ENCODE measurements at regions of chr2 and their contacts with region 1.

Region 1: DNA sequence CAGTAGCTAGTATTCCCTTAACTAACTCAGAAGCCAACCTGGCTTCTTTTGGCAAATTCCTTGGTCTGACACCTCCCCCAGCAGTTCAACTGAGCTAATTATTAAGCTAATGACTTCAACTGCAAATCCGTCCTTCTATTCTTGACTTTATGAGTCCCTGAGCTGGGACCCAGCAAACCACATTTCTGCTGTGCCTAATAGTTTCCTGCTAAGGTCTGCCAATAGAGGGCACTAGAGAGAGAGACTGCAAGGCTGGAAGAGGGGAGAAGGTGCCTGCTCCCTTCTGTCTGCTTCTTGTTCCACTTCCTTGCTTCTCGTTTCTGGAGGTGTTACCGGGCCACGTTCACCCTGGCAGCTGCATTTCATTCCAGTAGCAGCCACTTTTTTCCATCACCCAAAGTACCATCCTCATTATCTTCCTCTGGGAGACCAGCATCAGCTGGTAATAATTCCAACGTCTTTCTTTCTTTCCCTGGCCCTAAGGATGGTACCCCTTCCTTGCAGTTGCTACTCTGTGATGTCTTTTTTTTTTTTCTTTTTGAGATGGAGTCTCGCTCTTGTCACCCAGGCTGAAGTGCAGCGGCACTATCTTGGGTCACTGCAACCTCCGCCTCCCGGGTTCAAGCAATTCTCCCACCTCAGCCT is 352.0 kb downstream of the TNS1 start:
- DNase-seq: peak; percentile 46
- ATAC-seq: peak; percentile 95
- H3K4me3 Mint-ChIP-seq: no peak overlapping the region
- H3K27ac Mint-ChIP-seq: no peak overlapping the region
- H3K4me1 Mint-ChIP-seq: peaks cover 26% of the 10 kb centered on the region
- H3K27me3 Mint-ChIP-seq: no peaks in the 10 kb centered on the region
- CTCF ChIP-seq: peak; percentile 20; the same call in 1 of the 2 replicates

Region 2: GRCh38 chr2:217451666-217452065 is 199.2 kb before region 1 on chr2:
- CTCF ChIA-PET with region 1: no interaction called
- POLR2A ChIA-PET with region 1: no interaction called
- DNase-seq: no peak
- ATAC-seq: no peak
- H3K4me3 Mint-ChIP-seq: no peak overlapping the region
- H3K27ac Mint-ChIP-seq: no peak overlapping the region
- H3K4me1 Mint-ChIP-seq: no peaks in the 10 kb centered on the region
- H3K27me3 Mint-ChIP-seq: no peaks in the 10 kb centered on the region; the same call in 1 of the 2 replicates
- CTCF ChIP-seq: no peak

Region 3: GRCh38 chr2:217555081-217555876 is 95.6 kb before region 1 on chr2:
- CTCF ChIA-PET with region 1: interaction called, 10 read pairs
- POLR2A ChIA-PET with region 1: no interaction called
- DNase-seq: peak; percentile 22
- ATAC-seq: peak; percentile 76
- H3K4me3 Mint-ChIP-seq: no peak overlapping the region
- H3K27ac Mint-ChIP-seq: peak overlapping the region; percentile 37; the same call in 1 of the 2 replicates
- H3K4me1 Mint-ChIP-seq: peaks cover 49% of the 10 kb centered on the region
- H3K27me3 Mint-ChIP-seq: peaks cover 37% of the 10 kb centered on the region
- CTCF ChIP-seq: no peak

Region 4: GRCh38 chr2:217617616-217618022 is 33.2 kb before region 1 on chr2:
- CTCF ChIA-PET with region 1: interaction called, 14 read pairs
- POLR2A ChIA-PET with region 1: no interaction called
- DNase-seq: no peak
- ATAC-seq: no peak; the same call in 1 of the 2 replicates
- H3K4me3 Mint-ChIP-seq: no peak overlapping the region
- H3K27ac Mint-ChIP-seq: no peak overlapping the region
- H3K4me1 Mint-ChIP-seq: peaks cover 18% of the 10 kb centered on the region
- H3K27me3 Mint-ChIP-seq: no peaks in the 10 kb centered on the region
- CTCF ChIP-seq: no peak

Region 5: GRCh38 chr2:217636991-217637944 is 13.6 kb before region 1 on chr2:
- CTCF ChIA-PET with region 1: interaction called, 29 read pairs
- POLR2A ChIA-PET with region 1: no interaction called
- DNase-seq: no peak
- ATAC-seq: no peak
- H3K4me3 Mint-ChIP-seq: no peak overlapping the region
- H3K27ac Mint-ChIP-seq: no peak overlapping the region
- H3K4me1 Mint-ChIP-seq: no peaks in the 10 kb centered on the region
- H3K27me3 Mint-ChIP-seq: no peaks in the 10 kb centered on the region; the same call in 1 of the 2 replicates
- CTCF ChIP-seq: no peak

Region 6: DNA sequence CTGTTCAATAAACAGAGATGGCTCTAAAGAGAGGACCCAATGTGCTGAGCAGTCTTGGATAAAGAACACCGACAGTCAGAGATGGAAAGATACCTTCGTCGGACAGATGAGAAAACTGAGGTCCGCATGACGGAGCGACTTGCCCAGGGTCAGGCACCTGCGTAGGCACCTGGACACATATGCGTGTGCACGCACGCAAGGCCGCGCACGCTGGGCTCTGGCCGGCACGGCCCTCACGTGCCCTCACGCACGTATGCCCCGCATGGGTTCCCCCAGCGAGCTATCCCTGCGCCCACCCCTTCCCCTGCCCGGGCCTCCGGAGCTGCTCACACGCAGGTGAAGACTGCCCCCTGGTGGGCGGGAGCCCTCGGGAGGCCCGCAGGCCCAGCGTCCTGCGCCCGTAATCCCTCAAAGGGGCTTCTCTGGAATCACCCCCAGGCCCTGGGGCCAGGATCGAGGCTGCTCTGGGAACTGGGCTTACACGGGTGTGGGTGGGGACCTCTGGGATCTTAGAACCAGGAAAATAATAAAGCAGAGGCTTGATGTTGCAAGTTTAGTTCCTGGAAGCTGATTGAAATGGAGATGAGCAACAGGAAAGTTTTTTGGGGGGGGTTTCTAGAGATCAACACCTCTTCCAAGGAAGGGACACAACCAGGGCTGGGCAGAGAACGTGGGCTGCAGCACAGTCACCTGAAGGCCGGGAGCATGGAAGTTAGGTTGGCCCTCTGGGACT is 105.7 kb after region 1 on chr2:
- CTCF ChIA-PET with region 1: interaction called, 18 read pairs
- POLR2A ChIA-PET with region 1: no interaction called
- DNase-seq: peak; percentile 93
- ATAC-seq: peak; percentile 97
- H3K4me3 Mint-ChIP-seq: peak overlapping the region; percentile 44
- H3K27ac Mint-ChIP-seq: no peak overlapping the region
- H3K4me1 Mint-ChIP-seq: peaks cover 20% of the 10 kb centered on the region
- H3K27me3 Mint-ChIP-seq: peaks cover 17% of the 10 kb centered on the region
- CTCF ChIP-seq: peak; percentile 89